GM10248 (cell line): ENCODE measurements at regions of chr1 and their contacts with region 1.

Region 1: DNA sequence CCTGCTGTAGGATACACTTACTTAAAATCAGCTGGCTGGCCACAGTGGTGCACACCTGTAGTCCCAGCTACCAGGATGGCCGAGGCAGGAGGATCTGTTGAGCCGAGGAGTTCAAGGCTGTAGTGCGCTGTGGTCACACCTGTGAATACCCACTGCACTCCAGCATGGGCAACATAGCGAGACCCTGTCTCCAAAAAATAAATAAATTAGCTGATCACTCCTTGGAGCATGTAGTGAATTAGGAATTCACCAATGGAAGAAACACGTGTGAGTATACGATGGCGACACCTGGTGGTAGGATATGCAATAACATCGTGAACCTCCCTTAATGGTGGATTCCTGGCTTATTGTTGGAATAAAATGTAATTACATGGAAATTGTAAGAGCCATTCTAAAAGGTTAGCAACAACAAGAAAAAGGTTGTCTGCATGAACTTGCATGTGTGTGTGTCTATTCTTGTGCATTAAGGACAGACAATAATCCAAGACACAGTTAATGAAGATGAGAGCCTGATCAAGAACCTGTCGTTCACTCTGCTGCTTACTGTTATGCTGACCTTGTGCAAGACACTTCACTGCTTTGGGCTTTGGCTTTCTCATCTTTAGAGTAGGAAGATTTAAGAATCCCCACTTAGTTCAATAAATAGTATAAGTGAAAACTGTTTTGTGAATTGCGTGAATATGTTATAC is 38.6 kb upstream of the COX20 start:
- DNase-seq: peak; percentile 50
- CTCF ChIP-seq: peak; percentile 63

Region 2: DNA sequence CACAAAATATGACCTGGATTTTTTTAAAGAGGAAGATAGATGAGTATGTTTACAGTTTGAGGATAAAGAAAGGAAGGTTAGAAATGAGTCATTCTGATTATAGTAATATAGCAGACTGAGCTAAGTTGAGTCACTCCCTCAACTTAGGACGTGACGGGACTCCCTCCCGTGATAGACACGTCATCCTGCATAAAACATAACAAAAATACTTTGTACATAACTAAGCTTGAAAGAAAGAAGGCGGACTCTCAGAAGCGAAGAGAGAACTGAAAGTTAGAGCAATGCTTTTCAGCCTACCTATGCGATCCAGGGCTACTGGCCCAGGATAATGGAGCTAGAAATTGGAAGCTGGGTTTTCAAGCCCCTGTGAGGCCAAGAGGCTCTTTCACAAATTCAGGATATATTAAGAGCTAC is 196.9 kb before region 1 on chr1:
- CTCF ChIA-PET with region 1: interaction called, 121 read pairs
- POLR2A ChIA-PET with region 1: no interaction called
- DNase-seq: peak; percentile 72
- CTCF ChIP-seq: no peak

Region 3: GRCh38 chr1:244761279-244761678 is 35.6 kb before region 1 on chr1:
- CTCF ChIA-PET with region 1: no interaction called
- POLR2A ChIA-PET with region 1: no interaction called
- DNase-seq: no peak
- CTCF ChIP-seq: no peak

Region 4: GRCh38 chr1:244782056-244782455 is 14.8 kb before region 1 on chr1:
- CTCF ChIA-PET with region 1: interaction called, 15 read pairs
- POLR2A ChIA-PET with region 1: no interaction called
- DNase-seq: no peak
- CTCF ChIP-seq: no peak

Region 5: GRCh38 chr1:244815600-244816099 is 18.8 kb after region 1 on chr1:
- CTCF ChIA-PET with region 1: interaction called, 28 read pairs
- POLR2A ChIA-PET with region 1: no interaction called
- DNase-seq: no peak
- CTCF ChIP-seq: no peak

Region 6: DNA sequence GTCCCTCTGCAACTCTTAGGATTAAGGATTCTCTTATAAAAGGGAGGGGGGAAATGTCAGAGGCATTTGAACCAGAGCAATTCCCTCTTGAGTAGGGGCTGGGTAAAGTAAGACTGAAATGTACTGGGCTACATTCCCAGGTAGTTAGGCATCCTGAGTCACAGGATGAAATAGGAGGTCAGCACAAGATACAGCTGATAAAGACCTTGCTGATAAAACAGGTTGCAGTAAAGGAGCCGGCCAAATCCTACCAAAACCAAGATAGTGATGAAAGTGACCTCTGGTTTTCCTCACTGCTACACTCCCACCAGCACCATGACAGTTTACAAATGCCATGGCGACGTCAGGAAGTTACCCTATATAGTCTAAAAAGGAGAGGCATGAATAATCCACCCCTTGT is 24.3 kb after region 1 on chr1:
- CTCF ChIA-PET with region 1: interaction called, 10 read pairs
- POLR2A ChIA-PET with region 1: no interaction called
- DNase-seq: no peak
- CTCF ChIP-seq: no peak

Region 7: GRCh38 chr1:244835276-244836134 is 38.6 kb after region 1 on chr1 and contains the start of gene COX20:
- CTCF ChIA-PET with region 1: interaction called, 10 read pairs
- POLR2A ChIA-PET with region 1: no interaction called
- DNase-seq: peak; percentile 83
- CTCF ChIP-seq: no peak